CD8-positive, alpha-beta T cell (primary cell): ENCODE measurements at regions of chr1 and their contacts with region 1.

Region 1: GRCh38 chr1:90729504-90730242 is 12.6 kb upstream of the BARHL2 start:
- DNase-seq: peak in 1 of 9 experiments; percentile 27
- ATAC-seq: peak; percentile 21
- H3K4me3 ChIP-seq: peak overlapping the region in 1 of 2 experiments; percentile 22
- H3K4me3 Mint-ChIP-seq: peak overlapping the region; percentile 79
- H3K27ac ChIP-seq: no peak overlapping the region
- H3K27ac Mint-ChIP-seq: no peak overlapping the region
- H3K4me1 ChIP-seq: peaks cover 40% of the 10 kb centered on the region
- H3K4me1 Mint-ChIP-seq: peaks cover 52% of the 10 kb centered on the region
- H3K27me3 ChIP-seq: peaks cover 41 to 64% of the 10 kb centered on the region in 2 experiments
- H3K27me3 Mint-ChIP-seq: peaks cover 85% of the 10 kb centered on the region
- CTCF ChIP-seq: peak; percentile 34

Region 2: DNA sequence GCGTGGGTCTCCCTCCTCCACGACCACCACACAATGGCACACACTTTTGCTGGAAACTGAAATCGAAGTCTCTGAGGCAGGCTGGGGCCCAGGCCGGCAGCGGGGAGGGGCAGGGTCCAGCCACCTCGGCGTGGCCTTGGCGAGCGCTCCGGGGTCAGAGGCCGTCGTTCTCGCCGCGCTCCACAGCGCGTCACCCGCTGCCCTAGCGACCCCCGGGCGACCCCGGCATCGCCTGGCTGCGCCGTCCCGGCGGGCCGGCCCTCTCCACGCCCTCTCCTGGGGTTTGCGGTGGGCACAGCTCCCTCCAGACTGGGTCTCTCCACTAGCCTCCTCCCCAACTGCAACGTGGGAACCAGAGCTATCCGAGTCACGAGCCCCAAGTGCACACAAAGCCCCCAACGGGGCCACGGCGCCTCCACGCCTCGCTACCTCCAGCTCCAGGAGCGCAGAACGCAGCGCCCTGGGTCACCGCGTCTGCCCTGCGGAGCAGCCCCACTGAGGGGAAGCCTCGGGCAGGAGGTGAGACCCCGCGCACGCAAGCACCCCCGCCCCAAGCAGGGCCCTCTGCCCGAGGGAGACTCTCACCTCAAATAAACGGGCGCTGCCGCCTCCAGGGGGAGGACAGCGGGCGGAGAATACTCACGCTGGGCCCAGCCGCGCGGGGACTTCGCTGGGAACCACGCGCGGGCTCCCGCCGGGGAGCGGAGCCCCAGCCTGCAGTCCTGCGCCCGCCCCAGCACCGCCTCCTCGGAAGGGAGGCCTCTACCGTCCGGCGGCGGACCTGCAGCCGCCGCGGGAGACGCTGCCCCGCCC is 121.4 kb after region 1 on chr1:
- CTCF ChIA-PET with region 1: no interaction called
- POLR2A ChIA-PET with region 1: no interaction called
- intact Hi-C with region 1: loop called (anchors 5 kb)
- DNase-seq: peak; percentile 41 to 87 (median 73)
- ATAC-seq: peak; percentile 96
- H3K4me3 ChIP-seq: peak overlapping the region; percentile 64 to 78
- H3K4me3 Mint-ChIP-seq: peak overlapping the region; percentile 81
- H3K27ac ChIP-seq: no peak overlapping the region
- H3K27ac Mint-ChIP-seq: no peak overlapping the region
- H3K4me1 ChIP-seq: peaks cover 15% of the 10 kb centered on the region
- H3K4me1 Mint-ChIP-seq: peaks cover 12% of the 10 kb centered on the region
- H3K27me3 ChIP-seq: peaks cover 14 to 18% of the 10 kb centered on the region in 2 experiments
- H3K27me3 Mint-ChIP-seq: peaks cover 53% of the 10 kb centered on the region
- CTCF ChIP-seq: peak; percentile 62

Region 3: DNA sequence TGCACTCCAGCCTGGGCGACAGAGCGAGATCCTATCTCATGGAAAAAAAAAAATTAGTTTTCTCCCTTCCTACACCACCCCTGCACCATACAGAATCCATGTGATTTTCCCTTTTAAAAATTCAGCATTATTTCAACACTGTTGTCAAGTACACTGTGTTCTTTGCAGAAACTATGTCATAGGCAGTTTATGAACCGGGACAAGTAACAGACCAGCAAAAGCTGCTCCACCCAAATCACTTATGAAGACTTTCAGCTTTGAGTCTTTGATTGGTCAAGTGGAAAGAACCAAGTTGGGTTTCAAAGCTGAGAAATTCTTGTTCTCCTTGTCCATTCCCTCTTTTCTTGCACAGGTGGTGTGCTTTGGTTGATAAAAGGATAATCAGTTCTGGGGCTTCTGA is 943.9 kb after region 1 on chr1:
- CTCF ChIA-PET with region 1: no interaction called
- POLR2A ChIA-PET with region 1: no interaction called
- intact Hi-C with region 1: no loop called
- DNase-seq: no peak
- ATAC-seq: no peak
- H3K4me3 ChIP-seq: no peak overlapping the region
- H3K4me3 Mint-ChIP-seq: no peak overlapping the region
- H3K27ac ChIP-seq: no peak overlapping the region
- H3K27ac Mint-ChIP-seq: no peak overlapping the region
- H3K4me1 ChIP-seq: no peaks in the 10 kb centered on the region
- H3K4me1 Mint-ChIP-seq: no peaks in the 10 kb centered on the region
- H3K27me3 ChIP-seq: no peaks in the 10 kb centered on the region
- H3K27me3 Mint-ChIP-seq: no peaks in the 10 kb centered on the region
- CTCF ChIP-seq: no peak